Activated T-helper 1 cell treated with anti-CD3 and anti-CD28 coated beads, Interleukin-12 subunit alpha, Interleukin-12 subunit beta, Interleukin-2, Interleukin-4 antibody, amounts not matched to agents 30 ng/mL and 10 ng/mL and 1 ng/mL, durations not matched to agents 14 hours and 24 hours and 36 hours (primary cell): ENCODE measurements at regions of chr1 and their contacts with region 1.

Region 1: DNA sequence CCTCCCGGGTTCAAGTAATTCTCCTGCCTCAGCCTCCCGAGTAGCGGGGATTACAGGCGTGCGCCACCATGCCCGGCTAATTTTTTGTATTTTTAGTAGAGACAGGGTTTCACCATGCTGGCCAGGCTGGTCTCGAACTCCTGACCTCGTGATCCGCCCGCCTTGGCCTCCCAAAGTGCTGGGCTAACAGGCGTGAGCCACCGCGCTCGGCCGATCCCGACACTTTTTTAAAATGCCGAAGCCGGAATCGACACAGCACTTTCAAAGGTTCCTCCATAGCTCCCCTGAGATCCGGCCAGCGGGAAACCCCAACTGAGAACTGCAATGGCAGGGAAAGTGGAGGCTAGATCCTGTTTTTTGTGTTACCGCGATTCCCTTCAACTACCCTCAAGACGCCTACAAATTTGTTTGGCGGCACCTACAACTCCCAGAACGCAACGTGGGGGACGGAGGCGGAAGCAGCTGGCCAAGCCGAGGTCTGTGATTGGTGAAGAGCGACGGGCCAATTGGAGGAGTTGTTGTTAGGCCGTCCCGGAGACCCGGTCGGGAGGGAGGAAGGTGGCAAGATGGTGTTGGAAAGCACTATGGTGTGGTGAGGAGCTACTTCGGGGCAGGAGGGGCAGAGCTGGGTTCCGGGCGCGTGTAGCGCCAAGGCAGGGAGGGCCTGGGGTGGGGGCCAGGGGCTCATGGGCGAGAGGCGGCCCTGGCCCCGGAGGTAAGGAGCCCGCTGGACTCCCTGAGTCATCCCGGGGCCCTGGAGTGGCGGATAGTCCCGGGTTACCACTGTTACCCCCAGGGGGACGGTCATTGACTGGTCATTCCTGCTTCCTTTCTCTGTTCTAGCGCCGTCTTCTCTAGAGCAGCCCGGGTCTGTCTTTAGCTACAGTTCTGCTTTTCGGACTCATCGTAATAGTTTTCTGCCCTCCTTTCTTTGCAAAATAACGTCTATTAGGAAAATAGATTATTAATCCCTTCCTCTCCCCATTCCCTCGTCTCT is at the start of gene PSMD4:
- DNase-seq: peak; percentile 91
- H3K4me3 Mint-ChIP-seq: peak within 1 kb of the TSS; percentile 98
- H3K27ac Mint-ChIP-seq: peak within 1 kb of the TSS; percentile 88
- H3K4me1 Mint-ChIP-seq: peaks cover 17% of the 10 kb centered on the region
- H3K27me3 Mint-ChIP-seq: no peaks in the 10 kb centered on the region
- total RNA-seq, gene PSMD4: 276 and 285 TPM in 2 replicates

Region 2: GRCh38 chr1:151098126-151098525 is 156.4 kb before region 1 on chr1:
- intact Hi-C with region 1: loop called (anchors 1 kb)
- DNase-seq: no peak
- H3K4me3 Mint-ChIP-seq: no peak overlapping the region
- H3K27ac Mint-ChIP-seq: no peak overlapping the region
- H3K4me1 Mint-ChIP-seq: no peaks in the 10 kb centered on the region
- H3K27me3 Mint-ChIP-seq: no peaks in the 10 kb centered on the region

Region 3: GRCh38 chr1:151156515-151156819 is 98.0 kb before region 1 on chr1 and contains the start of gene TNFAIP8L2:
- intact Hi-C with region 1: loop called (anchors 1 kb)
- DNase-seq: peak; percentile 72
- H3K4me3 Mint-ChIP-seq: peak within 1 kb of the TSS; percentile 92
- H3K27ac Mint-ChIP-seq: peak within 1 kb of the TSS; percentile 99
- H3K4me1 Mint-ChIP-seq: peaks cover 42% of the 10 kb centered on the region
- H3K27me3 Mint-ChIP-seq: no peaks in the 10 kb centered on the region
- total RNA-seq, gene TNFAIP8L2: 38.0 and 38.5 TPM in 2 replicates

Region 4: DNA sequence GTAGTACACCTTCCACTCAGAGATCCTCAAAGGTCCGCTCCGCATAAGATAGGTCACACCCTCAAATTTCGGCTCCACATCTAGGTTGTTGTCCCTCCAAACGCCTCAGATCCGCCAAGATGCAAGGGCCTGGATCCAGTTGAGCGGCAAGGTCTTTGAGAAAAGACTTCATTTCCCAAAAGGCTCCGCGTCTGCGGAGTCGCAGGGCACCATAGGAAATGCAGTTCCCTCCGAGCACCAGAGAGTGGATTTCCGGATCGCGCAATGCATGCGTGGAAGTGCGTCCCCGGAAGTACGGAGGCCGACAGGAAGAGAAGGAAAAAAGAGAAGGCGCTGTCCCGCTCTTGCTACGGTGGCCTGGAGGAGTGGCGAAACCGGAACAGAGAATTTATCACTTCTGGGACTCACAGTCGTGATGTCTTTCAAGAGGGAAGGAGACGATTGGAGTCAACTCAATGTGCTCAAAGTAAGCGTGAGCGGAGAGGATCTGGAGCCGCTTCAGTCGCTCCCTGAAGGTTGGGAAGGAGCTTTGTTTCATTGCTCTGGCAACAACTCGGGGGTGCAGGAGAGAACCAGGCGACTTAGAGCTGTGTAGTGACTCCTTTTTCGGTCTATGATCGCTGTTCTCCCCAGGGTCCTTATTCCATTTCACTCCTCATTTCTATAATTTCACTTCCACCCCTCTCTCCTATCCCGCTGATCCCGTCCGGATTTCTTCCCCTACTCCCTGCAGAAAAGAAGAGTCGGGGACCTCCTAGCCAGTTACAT is 88.6 kb before region 1 on chr1 and contains the starts of genes LYSMD1 and SCNM1:
- intact Hi-C with region 1: loop called (anchors 1 kb)
- DNase-seq: peak; percentile 96
- H3K4me3 Mint-ChIP-seq: peak within 1 kb of the TSS; percentile 95
- H3K27ac Mint-ChIP-seq: peak within 1 kb of the TSS; percentile 97
- H3K4me1 Mint-ChIP-seq: peaks cover 53% of the 10 kb centered on the region
- H3K27me3 Mint-ChIP-seq: peaks cover 2% of the 10 kb centered on the region
- total RNA-seq, gene LYSMD1: 4.0 and 5.0 TPM in 2 replicates
- total RNA-seq, gene SCNM1: 111 and 117 TPM in 2 replicates

Region 5: GRCh38 chr1:151340870-151341754 is 86.6 kb after region 1 on chr1:
- intact Hi-C with region 1: loop called (anchors 2 kb)
- DNase-seq: peak; percentile 37
- H3K4me3 Mint-ChIP-seq: no peak overlapping the region
- H3K27ac Mint-ChIP-seq: peak overlapping the region; percentile 46
- H3K4me1 Mint-ChIP-seq: peaks cover 33% of the 10 kb centered on the region
- H3K27me3 Mint-ChIP-seq: no peaks in the 10 kb centered on the region

Region 6: DNA sequence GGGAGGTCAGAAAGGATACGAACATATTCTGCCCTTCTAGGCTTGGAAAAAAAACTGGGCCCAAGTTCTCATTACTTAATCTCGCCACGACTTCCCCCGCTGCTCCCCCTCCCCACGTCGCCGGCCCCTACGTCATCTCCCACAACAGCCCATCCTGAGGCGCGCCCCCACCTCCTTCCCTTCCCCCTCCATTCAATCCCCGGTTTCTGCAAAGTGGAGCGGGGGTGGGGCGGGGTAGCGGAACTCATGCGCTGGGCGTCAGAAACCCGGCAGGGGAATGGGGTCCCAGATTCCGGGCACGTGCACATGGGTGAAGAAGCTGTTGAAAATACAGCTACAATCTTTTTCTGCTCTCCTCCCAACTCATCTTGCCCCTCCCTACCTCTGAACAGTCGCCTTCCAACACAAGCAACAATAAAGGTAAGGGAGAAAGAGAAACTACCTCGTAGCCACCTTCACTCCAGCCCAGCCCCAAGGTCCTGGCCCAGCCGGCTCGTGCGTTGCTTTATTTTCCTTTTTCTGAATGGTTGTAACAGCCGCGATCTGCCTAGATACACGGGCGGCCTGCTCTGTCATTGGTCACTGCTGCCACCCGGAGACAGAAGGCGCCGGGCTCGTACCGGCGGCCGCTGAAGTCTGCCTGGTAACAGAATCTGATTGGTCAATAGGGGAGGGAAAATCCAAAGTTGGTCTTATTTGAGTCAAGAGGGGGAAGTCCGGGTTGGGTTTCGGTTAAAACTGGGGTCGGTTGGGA is 92.4 kb after region 1 on chr1 and contains the start of gene RFX5:
- intact Hi-C with region 1: loop called (anchors 1 kb)
- DNase-seq: peak; percentile 95
- H3K4me3 Mint-ChIP-seq: peak within 1 kb of the TSS; percentile 95
- H3K27ac Mint-ChIP-seq: peak within 1 kb of the TSS; percentile 99
- H3K4me1 Mint-ChIP-seq: peaks cover 45% of the 10 kb centered on the region
- H3K27me3 Mint-ChIP-seq: no peaks in the 10 kb centered on the region
- total RNA-seq, gene RFX5: 78.1 and 83.4 TPM in 2 replicates